PC-9 (cell line): ENCODE measurements at regions of chr7 and their contacts with region 1.

Region 1: GRCh38 chr7:6350433-6351058 is 78.1 kb upstream of the CYTH3 start:
- DNase-seq: no peak
- H3K4me3 ChIP-seq: no peak overlapping the region
- H3K27ac ChIP-seq: no peak overlapping the region
- H3K4me1 ChIP-seq: no peaks in the 10 kb centered on the region; the same call in 1 of the 2 replicates
- H3K27me3 ChIP-seq: no peaks in the 10 kb centered on the region
- CTCF ChIP-seq: no peak

Region 2: GRCh38 chr7:5892498-5892897 is 458.0 kb before region 1 on chr7:
- CTCF ChIA-PET with region 1: no interaction called
- POLR2A ChIA-PET with region 1: no interaction called
- intact Hi-C with region 1: no loop called
- DNase-seq: no peak
- H3K4me3 ChIP-seq: no peak overlapping the region
- H3K27ac ChIP-seq: no peak overlapping the region
- H3K4me1 ChIP-seq: no peaks in the 10 kb centered on the region; the same call in 1 of the 2 replicates
- H3K27me3 ChIP-seq: no peaks in the 10 kb centered on the region
- CTCF ChIP-seq: no peak

Region 3: DNA sequence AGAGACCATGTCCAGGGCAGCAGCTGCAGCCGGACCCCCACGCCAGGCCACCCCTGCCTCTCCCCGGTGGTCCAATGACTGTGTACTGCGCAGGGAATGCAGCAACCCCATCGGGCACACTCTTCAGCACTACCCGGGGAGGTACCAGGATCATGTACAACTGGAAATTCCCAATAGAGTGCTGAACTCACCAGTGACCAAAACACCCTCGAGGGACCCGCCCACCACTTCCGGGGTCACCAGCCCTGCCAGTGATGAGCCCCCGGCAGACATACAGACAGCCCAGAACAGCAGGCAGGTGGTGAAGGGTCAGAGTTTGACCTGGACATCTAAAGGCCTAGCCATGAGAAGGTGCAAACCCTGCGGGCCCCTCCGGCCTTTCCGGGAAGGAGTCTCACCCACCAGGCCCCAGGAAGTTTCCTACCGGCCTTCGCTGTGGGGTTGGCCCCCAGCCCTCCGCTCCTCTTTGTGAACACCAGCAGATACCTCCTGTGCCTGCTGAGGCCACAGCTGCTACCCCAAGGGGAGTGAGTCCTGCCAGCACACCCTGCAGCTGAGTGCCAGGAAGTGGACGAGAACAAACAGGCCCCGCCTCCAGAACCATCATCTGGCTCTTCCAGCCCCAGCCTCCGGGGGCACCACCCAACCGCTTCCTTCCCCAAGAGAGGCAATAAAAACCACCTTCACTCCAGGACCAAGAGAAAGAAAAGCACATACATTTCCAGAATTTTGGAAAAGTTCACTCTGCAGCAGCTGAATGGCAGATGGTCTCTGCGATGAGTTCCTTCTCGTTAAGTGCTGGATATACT is 324.3 kb before region 1 on chr7:
- CTCF ChIA-PET with region 1: interaction called, 11 read pairs
- POLR2A ChIA-PET with region 1: no interaction called
- intact Hi-C with region 1: no loop called
- DNase-seq: peak in 1 of 2 experiments; percentile 29
- H3K4me3 ChIP-seq: no peak overlapping the region
- H3K27ac ChIP-seq: no peak overlapping the region
- H3K4me1 ChIP-seq: no peaks in the 10 kb centered on the region
- H3K27me3 ChIP-seq: no peaks in the 10 kb centered on the region
- CTCF ChIP-seq: peak; percentile 57; the same call in 1 of the 2 replicates

Region 4: DNA sequence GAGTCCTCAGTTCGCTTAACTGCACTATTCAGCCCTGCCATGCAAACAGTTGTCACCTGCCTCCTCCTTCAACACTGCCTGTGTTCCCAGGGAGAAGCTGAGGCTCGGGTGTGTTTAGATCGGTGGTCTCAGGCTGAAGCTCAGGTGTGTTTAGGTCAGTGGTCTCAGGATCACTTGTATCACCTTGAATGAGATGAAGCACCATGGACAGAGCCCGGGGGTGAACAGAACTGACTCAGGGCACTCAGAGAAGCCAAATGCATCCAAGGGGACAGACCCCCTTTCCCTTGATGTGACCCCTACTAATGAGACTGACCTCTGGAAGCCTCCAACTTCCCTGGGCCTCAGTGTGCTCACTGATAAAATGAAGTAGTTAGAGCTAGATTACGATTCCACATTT is 162.2 kb before region 1 on chr7:
- CTCF ChIA-PET with region 1: no interaction called
- POLR2A ChIA-PET with region 1: no interaction called
- intact Hi-C with region 1: no loop called
- DNase-seq: no peak
- H3K4me3 ChIP-seq: no peak overlapping the region
- H3K27ac ChIP-seq: no peak overlapping the region
- H3K4me1 ChIP-seq: no peaks in the 10 kb centered on the region
- H3K27me3 ChIP-seq: no peaks in the 10 kb centered on the region
- CTCF ChIP-seq: no peak

Region 5: DNA sequence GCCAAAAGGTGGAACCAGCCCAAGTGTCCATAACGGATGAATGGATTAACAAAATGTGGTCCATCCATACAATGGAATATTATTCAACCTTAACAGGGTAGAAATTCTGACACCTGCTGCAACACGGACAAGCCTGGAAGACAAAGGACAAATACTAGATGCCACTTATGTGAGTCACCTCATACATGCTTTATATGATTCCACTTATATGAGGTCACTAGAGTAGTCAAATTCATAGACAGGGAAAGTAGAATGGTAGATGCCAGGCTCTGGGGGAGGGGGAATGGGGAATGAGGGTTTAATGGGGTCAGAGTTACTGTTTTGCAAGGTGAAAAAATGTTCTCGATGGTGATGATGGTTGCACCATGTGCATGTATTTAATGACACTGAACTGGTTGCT is 44.1 kb before region 1 on chr7:
- CTCF ChIA-PET with region 1: no interaction called
- POLR2A ChIA-PET with region 1: no interaction called
- intact Hi-C with region 1: no loop called
- DNase-seq: peak; percentile 90 to 99
- H3K4me3 ChIP-seq: no peak overlapping the region
- H3K27ac ChIP-seq: peak overlapping the region; percentile 75
- H3K4me1 ChIP-seq: peaks cover 36% of the 10 kb centered on the region
- H3K27me3 ChIP-seq: no peaks in the 10 kb centered on the region
- CTCF ChIP-seq: no peak

Region 6: DNA sequence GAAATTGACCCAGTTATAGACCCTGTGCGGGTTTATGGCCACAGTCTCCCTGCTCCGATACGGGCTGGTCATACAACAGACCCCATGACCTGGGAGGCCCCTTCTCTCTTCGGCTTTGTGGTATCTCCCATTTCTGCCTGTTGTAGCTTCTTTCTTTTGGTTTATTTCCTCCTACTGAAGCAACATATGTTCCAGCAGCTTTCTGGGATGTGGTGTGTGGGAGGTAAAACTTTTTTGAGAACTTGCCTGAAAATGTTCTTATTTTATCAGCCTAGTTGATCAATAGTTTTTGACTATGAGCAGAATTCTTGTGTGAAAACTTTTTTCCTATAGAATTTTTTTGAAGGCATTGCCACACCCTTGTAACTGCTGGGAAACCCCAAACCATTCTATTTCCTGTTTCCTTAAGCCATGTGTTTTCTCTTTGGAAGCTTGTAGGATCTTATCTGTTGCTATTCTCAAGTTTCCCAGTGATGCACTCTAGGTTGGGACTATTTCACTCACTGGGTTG is 17.2 kb after region 1 on chr7:
- CTCF ChIA-PET with region 1: interaction called, 14 read pairs
- POLR2A ChIA-PET with region 1: no interaction called
- intact Hi-C with region 1: no loop called
- DNase-seq: peak in 1 of 2 experiments; percentile 63
- H3K4me3 ChIP-seq: no peak overlapping the region
- H3K27ac ChIP-seq: peak overlapping the region; percentile 18; the same call in 1 of the 2 replicates
- H3K4me1 ChIP-seq: peaks cover 10% of the 10 kb centered on the region
- H3K27me3 ChIP-seq: no peaks in the 10 kb centered on the region
- CTCF ChIP-seq: no peak

Region 7: GRCh38 chr7:6407434-6407833 is 56.9 kb after region 1 on chr7:
- CTCF ChIA-PET with region 1: interaction called, 10 read pairs
- POLR2A ChIA-PET with region 1: no interaction called
- intact Hi-C with region 1: no loop called
- DNase-seq: no peak
- H3K4me3 ChIP-seq: no peak overlapping the region
- H3K27ac ChIP-seq: no peak overlapping the region
- H3K4me1 ChIP-seq: no peaks in the 10 kb centered on the region
- H3K27me3 ChIP-seq: no peaks in the 10 kb centered on the region
- CTCF ChIP-seq: no peak

Region 8: GRCh38 chr7:6491194-6491593 is 140.6 kb after region 1 on chr7:
- CTCF ChIA-PET with region 1: no interaction called
- POLR2A ChIA-PET with region 1: interaction called, 17 read pairs
- intact Hi-C with region 1: no loop called
- DNase-seq: no peak
- H3K4me3 ChIP-seq: no peak overlapping the region
- H3K27ac ChIP-seq: no peak overlapping the region
- H3K4me1 ChIP-seq: no peaks in the 10 kb centered on the region
- H3K27me3 ChIP-seq: no peaks in the 10 kb centered on the region
- CTCF ChIP-seq: no peak